HepG2 (cell line): ENCODE measurements at regions of chr17 and their contacts with region 1.

Region 1: GRCh38 chr17:67386965-67387551 is 10.0 kb downstream of the PITPNC1 start:
- DNase-seq: peak; percentile 56
- ATAC-seq: peak; percentile 82
- H3K4me3 ChIP-seq: no peak overlapping the region
- H3K27ac ChIP-seq: no peak overlapping the region
- H3K4me1 ChIP-seq: peaks cover 16% of the 10 kb centered on the region
- H3K27me3 ChIP-seq: no peaks in the 10 kb centered on the region
- CTCF ChIP-seq: peak; percentile 92
- EP300 ChIP-seq: no peak
- POLR2A ChIP-seq: no peak
- RAD21 ChIP-seq: peak; percentile 89

Region 2: GRCh38 chr17:67411397-67411796 is 24.3 kb after region 1 on chr17:
- CTCF ChIA-PET with region 1: no interaction called
- POLR2A ChIA-PET with region 1: no interaction called
- in situ Hi-C with region 1: no loop called
- intact Hi-C with region 1: no loop called
- DNase-seq: no peak
- ATAC-seq: no peak
- H3K4me3 ChIP-seq: no peak overlapping the region
- H3K27ac ChIP-seq: no peak overlapping the region
- H3K4me1 ChIP-seq: no peaks in the 10 kb centered on the region
- H3K27me3 ChIP-seq: no peaks in the 10 kb centered on the region
- CTCF ChIP-seq: no peak
- EP300 ChIP-seq: no peak
- POLR2A ChIP-seq: no peak
- RAD21 ChIP-seq: no peak

Region 3: DNA sequence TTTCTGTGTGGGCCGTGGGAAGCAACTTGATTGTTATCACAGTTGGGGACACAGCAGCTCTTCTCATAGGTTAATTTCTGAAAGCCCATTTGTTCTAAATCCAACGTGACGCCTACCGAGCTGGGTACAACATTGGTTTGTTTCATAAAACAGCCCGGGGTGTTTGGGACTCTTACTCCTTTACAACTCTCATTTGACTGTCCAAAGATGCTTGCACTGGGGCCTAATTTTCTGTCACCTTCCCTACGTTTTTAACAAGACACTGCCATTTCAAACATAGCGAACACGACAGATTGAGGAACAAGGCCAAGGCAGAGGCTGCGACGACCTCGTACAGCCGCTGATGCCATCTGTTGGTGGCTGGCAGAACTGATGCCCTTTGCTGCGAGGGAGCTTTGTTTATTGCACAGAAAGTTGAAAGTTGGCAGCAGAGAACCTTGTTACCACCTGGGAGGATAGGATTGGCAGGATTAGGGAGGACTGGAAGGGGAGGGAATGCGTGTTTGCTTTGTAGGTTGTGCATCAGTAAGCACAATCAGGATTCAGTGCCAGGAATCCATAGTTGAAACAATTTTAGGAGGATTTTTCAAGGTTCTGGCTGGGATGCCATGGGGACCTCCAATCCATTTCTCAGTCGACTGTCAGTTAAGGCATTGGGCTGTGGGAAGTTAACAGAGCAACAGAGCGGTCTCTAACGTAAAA is 88.3 kb after region 1 on chr17:
- CTCF ChIA-PET with region 1: interaction called, 30 read pairs
- POLR2A ChIA-PET with region 1: interaction called, 3 read pairs
- in situ Hi-C with region 1: no loop called
- intact Hi-C with region 1: loop called (anchors 1 kb)
- DNase-seq: peak; percentile 50
- ATAC-seq: peak; percentile 89
- H3K4me3 ChIP-seq: no peak overlapping the region
- H3K27ac ChIP-seq: no peak overlapping the region
- H3K4me1 ChIP-seq: peaks cover 9% of the 10 kb centered on the region; the same call in 1 of the 2 replicates
- H3K27me3 ChIP-seq: no peaks in the 10 kb centered on the region
- CTCF ChIP-seq: peak; percentile 94
- EP300 ChIP-seq: no peak
- POLR2A ChIP-seq: no peak
- RAD21 ChIP-seq: peak; percentile 82

Region 4: DNA sequence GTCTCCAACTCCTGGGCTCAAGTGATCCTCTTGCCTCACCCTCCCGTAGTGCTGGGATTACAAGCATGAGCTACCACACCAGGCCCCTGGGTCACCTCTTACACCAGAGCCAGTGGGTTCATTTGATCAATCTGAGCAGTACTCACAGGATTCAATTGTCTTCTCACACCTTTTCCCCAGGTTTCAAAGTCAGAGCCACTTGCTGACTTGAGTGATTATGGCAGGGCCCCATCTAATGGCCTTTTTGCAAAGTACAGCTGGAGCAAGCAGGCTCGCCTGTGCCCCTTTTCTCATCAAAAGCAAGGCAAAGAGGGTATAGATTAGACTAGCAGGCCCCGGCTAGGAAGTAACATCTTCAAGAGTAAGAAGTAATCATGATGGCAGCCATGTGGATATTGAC is 215.9 kb after region 1 on chr17:
- CTCF ChIA-PET with region 1: interaction called, 11 read pairs
- POLR2A ChIA-PET with region 1: no interaction called
- in situ Hi-C with region 1: no loop called
- intact Hi-C with region 1: loop called (anchors 1 kb)
- DNase-seq: peak; percentile 71
- ATAC-seq: peak; percentile 90
- H3K4me3 ChIP-seq: no peak overlapping the region
- H3K27ac ChIP-seq: no peak overlapping the region
- H3K4me1 ChIP-seq: peaks cover 11% of the 10 kb centered on the region
- H3K27me3 ChIP-seq: no peaks in the 10 kb centered on the region
- CTCF ChIP-seq: peak; percentile 76
- EP300 ChIP-seq: no peak
- POLR2A ChIP-seq: no peak
- RAD21 ChIP-seq: peak; percentile 71

Region 5: DNA sequence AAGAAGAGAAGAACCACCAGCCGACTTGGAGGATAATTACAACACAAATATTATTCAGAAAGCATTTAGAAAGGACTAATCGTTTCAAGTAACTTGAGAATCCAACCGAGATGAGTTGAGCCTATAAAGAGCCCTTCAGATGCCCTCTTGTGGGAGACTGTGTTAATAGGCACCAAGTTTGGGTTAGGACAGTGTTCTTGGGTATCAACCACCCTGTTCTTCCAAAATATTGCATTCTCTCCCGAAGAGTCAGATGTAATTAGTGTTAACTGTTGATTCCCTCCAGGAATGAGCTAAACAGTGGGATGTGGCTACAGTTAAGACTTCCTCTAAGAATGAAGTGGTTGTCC is 242.9 kb after region 1 on chr17:
- CTCF ChIA-PET with region 1: no interaction called
- POLR2A ChIA-PET with region 1: no interaction called
- in situ Hi-C with region 1: no loop called
- intact Hi-C with region 1: loop called (anchors 5 kb)
- DNase-seq: peak; percentile 24
- ATAC-seq: peak; percentile 20; the same call in 1 of the 3 replicates
- H3K4me3 ChIP-seq: no peak overlapping the region
- H3K27ac ChIP-seq: no peak overlapping the region
- H3K4me1 ChIP-seq: peaks cover 17% of the 10 kb centered on the region; the same call in 1 of the 2 replicates
- H3K27me3 ChIP-seq: no peaks in the 10 kb centered on the region
- CTCF ChIP-seq: peak; percentile 47
- EP300 ChIP-seq: no peak
- POLR2A ChIP-seq: no peak
- RAD21 ChIP-seq: no peak